ENCODE measurements at regions of chr17 and their contacts with region 1.

Region 1: GRCh38 chr17:32240750-32241149 is 24.9 kb upstream of the RHBDL3 start:
- DNase-seq: no peak
- H3K4me3 ChIP-seq: no peak overlapping the region
- CTCF ChIP-seq: no peak

Region 2: GRCh38 chr17:32253117-32253611 is 12.4 kb after region 1 on chr17:
- CTCF ChIA-PET with region 1: interaction called, 34 read pairs
- POLR2A ChIA-PET with region 1: no interaction called
- DNase-seq: no peak
- H3K4me3 ChIP-seq: no peak overlapping the region
- CTCF ChIP-seq: peak; percentile 98

Measured in AG04449 (cell line).